ENCODE measurements at regions of chr20 and their contacts with region 1.

Region 1: DNA sequence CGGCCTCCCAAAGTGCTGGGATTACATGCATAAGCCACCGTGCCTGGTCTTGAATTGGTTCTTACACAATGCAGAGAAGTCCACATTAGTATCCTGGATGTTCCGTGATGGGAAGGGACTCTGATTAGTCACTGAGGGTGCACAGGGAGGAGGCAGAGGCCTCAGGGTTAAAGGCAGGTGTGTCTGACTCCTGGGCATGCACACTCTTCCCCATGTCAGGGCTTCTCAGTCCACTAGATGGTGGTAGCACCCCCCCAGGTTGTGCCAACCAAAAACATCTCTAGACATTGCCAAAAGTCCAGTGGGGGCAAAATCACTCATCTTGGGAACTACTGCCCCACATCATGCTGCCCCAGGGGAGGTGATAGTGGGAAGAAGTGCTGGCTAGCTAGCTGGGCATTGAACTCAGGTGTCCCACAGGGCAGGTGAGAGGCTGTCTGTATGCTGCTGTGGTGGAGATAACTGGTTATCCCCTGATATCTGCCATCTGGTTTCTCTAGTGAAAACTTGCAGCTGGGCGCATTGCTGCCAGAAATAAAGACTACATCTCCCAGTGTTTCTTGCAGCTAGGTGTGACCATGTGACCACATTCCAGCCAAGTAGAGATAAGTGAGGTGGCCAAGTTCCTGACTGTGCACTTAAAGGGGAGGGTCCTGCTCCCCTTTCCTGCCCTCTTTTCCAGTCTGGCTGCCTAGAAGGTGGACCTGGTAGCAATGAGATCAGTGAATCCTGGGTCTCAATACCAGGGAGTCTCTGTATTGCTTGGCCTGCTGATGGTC is 8.4 kb upstream of the NSFL1C start:
- DNase-seq: peak; percentile 65 to 81
- H3K4me3 ChIP-seq: peak overlapping the region; percentile 54; the same call in 1 of the 2 replicates
- H3K27ac ChIP-seq: peak overlapping the region; percentile 92
- H3K4me1 ChIP-seq: peaks cover 73% of the 10 kb centered on the region
- H3K27me3 ChIP-seq: no peaks in the 10 kb centered on the region
- CTCF ChIP-seq: peak; percentile 69

Region 2: GRCh38 chr20:1489764-1490450 is 14.9 kb after region 1 on chr20:
- CTCF ChIA-PET with region 1: no interaction called
- POLR2A ChIA-PET with region 1: interaction called, 3 read pairs
- intact Hi-C with region 1: loop called (anchors 1 kb)
- DNase-seq: peak; percentile 65 to 98
- H3K4me3 ChIP-seq: peak overlapping the region; percentile 32
- H3K27ac ChIP-seq: peak overlapping the region; percentile 97
- H3K4me1 ChIP-seq: peaks cover 53% of the 10 kb centered on the region
- H3K27me3 ChIP-seq: no peaks in the 10 kb centered on the region
- CTCF ChIP-seq: no peak

Region 3: GRCh38 chr20:1524004-1524403 is 49.0 kb after region 1 on chr20:
- CTCF ChIA-PET with region 1: no interaction called
- POLR2A ChIA-PET with region 1: no interaction called
- intact Hi-C with region 1: no loop called
- DNase-seq: no peak
- H3K4me3 ChIP-seq: no peak overlapping the region
- H3K27ac ChIP-seq: no peak overlapping the region
- H3K4me1 ChIP-seq: peaks cover 5% of the 10 kb centered on the region; the same call in 1 of the 2 replicates
- H3K27me3 ChIP-seq: no peaks in the 10 kb centered on the region
- CTCF ChIP-seq: no peak

Region 4: GRCh38 chr20:1535420-1536175 is 60.6 kb after region 1 on chr20:
- CTCF ChIA-PET with region 1: no interaction called
- POLR2A ChIA-PET with region 1: no interaction called
- intact Hi-C with region 1: no loop called
- DNase-seq: no peak
- H3K4me3 ChIP-seq: no peak overlapping the region
- H3K27ac ChIP-seq: no peak overlapping the region
- H3K4me1 ChIP-seq: no peaks in the 10 kb centered on the region
- H3K27me3 ChIP-seq: no peaks in the 10 kb centered on the region
- CTCF ChIP-seq: no peak

Region 5: DNA sequence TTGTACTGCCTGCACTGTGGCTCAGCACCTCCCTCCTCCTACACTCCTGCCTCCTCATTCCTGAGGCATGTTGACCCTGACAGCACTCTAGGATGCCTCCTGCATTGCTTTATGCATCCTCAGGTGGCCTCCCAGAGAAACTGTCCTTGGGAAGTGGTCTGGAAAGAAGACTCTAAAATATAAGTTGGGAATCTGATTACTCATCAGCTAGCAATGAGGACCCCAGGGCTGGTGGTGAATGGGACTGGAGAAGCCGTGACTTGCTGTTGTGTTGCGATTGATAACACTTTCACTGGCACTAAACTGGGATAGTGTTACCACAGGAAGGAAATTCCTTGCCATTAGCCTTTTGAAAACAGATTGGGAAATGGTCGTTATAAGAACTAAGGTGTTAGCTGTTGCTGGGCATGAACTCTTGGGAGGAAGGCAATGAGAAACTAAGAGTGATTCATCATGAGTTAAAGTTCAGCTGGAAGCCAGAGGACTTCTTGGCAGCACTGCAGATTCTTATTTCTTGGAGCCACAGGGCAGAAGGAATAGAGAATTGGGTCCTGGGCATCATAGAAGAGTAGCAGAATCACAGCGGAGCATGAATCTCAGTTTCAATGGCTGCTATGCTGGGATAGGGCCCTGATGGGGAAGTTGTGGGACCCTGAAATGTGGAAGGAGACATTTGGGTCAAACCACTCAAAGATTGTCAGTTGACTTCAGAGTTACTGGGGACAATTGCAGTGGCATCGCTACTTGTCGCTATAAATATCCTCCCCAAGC is 92.6 kb after region 1 on chr20:
- CTCF ChIA-PET with region 1: no interaction called
- POLR2A ChIA-PET with region 1: no interaction called
- intact Hi-C with region 1: loop called (anchors 1 kb)
- DNase-seq: peak; percentile 76 to 97
- H3K4me3 ChIP-seq: no peak overlapping the region
- H3K27ac ChIP-seq: peak overlapping the region; percentile 99
- H3K4me1 ChIP-seq: peaks cover 67% of the 10 kb centered on the region
- H3K27me3 ChIP-seq: no peaks in the 10 kb centered on the region
- CTCF ChIP-seq: no peak

Region 6: DNA sequence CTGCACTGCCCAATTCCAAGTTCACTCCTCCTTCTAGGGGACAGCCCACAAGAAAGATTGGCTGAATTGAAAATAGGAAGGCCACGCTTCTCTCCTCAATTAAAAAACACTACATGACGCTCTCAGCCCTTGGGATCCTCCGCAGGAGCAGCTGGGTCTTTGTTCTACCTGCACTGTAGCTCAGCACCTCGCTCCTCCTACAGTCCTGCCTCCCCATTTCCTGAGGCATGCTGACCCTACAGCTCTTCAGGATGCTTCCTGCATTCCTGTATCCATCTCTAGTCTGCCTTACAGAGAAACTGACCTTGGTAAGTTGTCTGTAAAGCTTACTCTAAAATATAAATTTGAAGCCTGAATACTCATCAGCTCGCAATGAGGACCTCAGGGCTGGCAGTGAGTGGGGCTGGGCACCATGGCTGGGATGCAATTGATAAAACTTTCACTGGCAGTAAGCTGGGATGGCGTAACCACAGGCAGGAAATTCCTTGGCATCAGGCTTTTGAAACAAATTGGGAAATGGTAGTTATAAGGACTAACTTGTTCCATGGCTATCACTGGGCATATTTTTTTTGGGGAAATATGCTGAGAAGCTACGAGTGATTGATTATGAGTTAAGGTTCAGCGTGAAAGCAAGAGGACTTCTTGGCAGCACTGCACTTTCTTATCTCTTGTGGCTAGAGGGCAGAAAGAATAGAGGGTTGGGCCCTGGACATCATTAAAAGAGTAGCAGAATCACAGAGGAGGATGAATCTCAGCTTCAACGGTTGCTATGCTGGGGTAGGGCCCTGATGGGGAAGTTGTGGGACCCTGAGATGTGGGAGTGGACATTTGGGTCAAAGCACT is 156.5 kb after region 1 on chr20:
- CTCF ChIA-PET with region 1: no interaction called
- POLR2A ChIA-PET with region 1: no interaction called
- intact Hi-C with region 1: loop called (anchors 5 kb)
- DNase-seq: peak; percentile 49 to 84
- H3K4me3 ChIP-seq: peak overlapping the region; percentile 19; the same call in 1 of the 2 replicates
- H3K27ac ChIP-seq: peak overlapping the region; percentile 57
- H3K4me1 ChIP-seq: peaks cover 47% of the 10 kb centered on the region
- H3K27me3 ChIP-seq: no peaks in the 10 kb centered on the region
- CTCF ChIP-seq: no peak

Region 7: GRCh38 chr20:1776681-1777475 is 301.9 kb after region 1 on chr20:
- CTCF ChIA-PET with region 1: no interaction called
- POLR2A ChIA-PET with region 1: no interaction called
- intact Hi-C with region 1: loop called (anchors 1 kb)
- DNase-seq: peak; percentile 86 to 90
- H3K4me3 ChIP-seq: peak overlapping the region; percentile 70
- H3K27ac ChIP-seq: peak overlapping the region; percentile 74
- H3K4me1 ChIP-seq: peaks cover 27% of the 10 kb centered on the region
- H3K27me3 ChIP-seq: no peaks in the 10 kb centered on the region
- CTCF ChIP-seq: peak; percentile 89

Measured in PC-9 (cell line).